Posterior vena cava (tissue), 2 donors: ENCODE measurements at regions of chr6 and their contacts with region 1.

Region 1: GRCh38 chr6:39065561-39065960 is 17.0 kb downstream of the GLP1R start:
- DNase-seq: peak; percentile 53

Region 2: GRCh38 chr6:39029156-39030011 is 36.2 kb before region 1 on chr6:
- intact Hi-C with region 1: loop called in 1 of 2 experiments (anchors 1 kb)
- DNase-seq: no peak

Region 3: DNA sequence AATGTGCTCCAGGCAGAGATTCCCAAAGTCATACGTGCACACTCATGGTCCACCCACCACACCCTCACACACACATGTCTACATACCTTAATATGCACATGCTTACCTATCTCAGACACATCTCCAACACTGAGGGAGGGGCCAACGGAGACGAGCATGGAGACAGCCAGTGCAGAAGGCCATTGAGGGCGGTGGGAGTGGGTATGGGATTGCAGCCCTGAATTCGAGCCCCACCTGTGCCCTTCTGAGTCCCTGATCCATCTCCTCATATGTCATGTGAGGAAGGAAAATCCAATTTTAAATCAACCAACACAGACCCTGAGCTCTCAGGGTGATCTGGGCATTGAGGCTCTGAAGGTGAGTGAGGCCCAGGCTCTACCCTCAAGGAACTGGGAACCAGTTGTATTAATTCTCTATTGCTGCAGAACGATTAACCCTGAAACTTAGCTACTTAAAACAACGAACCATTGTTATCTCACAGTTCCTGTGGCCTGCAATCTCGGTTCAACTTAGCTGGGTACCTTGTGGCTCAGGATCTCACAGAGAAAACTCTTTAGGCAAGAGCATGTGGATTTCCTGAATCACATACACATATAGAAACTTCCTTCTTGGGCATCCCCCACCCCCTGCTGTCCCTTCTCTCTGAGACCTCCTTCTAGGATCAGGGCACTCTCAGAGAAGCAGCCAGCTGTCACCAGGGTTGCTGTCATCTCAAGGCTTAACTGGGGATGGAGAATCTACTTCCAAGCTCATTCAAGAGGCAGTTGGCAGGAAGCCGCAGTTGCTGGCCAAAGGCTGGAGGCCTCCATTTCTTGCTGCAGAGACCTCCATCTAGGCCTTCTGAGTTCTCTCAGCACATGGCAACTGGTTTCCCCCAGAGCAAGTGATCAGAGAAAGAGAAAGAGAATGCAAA is 11.3 kb after region 1 on chr6:
- intact Hi-C with region 1: no loop called
- DNase-seq: no peak

Region 4: GRCh38 chr6:39228992-39229767 is 163.6 kb after region 1 on chr6 and contains the start of gene KCNK5:
- intact Hi-C with region 1: no loop called
- DNase-seq: peak; percentile 93
- total RNA-seq, gene KCNK5: 0.76 to 2.1 TPM

Region 5: GRCh38 chr6:40472353-40472752 is 1406.8 kb after region 1 on chr6:
- intact Hi-C with region 1: no loop called
- DNase-seq: no peak